Aorta (tissue), 5 donors: ENCODE measurements at regions of chr15 and their contacts with region 1.

Region 1: GRCh38 chr15:88704791-88705768 is 66.3 kb downstream of the ISG20 start:
- DNase-seq: peak; percentile 89 to 95
- ATAC-seq: peak; percentile 79
- H3K4me3 ChIP-seq: peak overlapping the region; percentile 0 to 63
- H3K27ac ChIP-seq: peak overlapping the region in 1 of 2 donors; percentile 91
- H3K4me1 ChIP-seq: no peaks in the 10 kb centered on the region
- H3K27me3 ChIP-seq: no peaks in the 10 kb centered on the region

Region 2: GRCh38 chr15:88664151-88664778 is 40.8 kb before region 1 on chr15:
- intact Hi-C with region 1: loop called (anchors 1 to 5 kb)
- DNase-seq: peak in 1 of 2 donors; percentile 55
- ATAC-seq: peak; percentile 42
- H3K4me3 ChIP-seq: no peak overlapping the region
- H3K27ac ChIP-seq: no peak overlapping the region
- H3K4me1 ChIP-seq: peaks cover 0 to 13% of the 10 kb centered on the region in 2 donors
- H3K27me3 ChIP-seq: no peaks in the 10 kb centered on the region